Activated CD4-positive, alpha-beta memory T cell treated with anti-CD3 and anti-CD28 coated beads, Interleukin-2, amount 10 ng/mL, durations not matched to agents 7 days and 5 days (primary cell): ENCODE measurements at regions of chr3 and their contacts with region 1.

Region 1: GRCh38 chr3:32296256-32297204 is 58.0 kb downstream of the CMTM8 start:
- DNase-seq: peak; percentile 68
- H3K4me3 Mint-ChIP-seq: peak overlapping the region; percentile 21
- H3K27ac Mint-ChIP-seq: peak overlapping the region; percentile 63
- H3K4me1 Mint-ChIP-seq: peaks cover 27% of the 10 kb centered on the region
- H3K27me3 Mint-ChIP-seq: no peaks in the 10 kb centered on the region

Region 2: GRCh38 chr3:31713816-31714215 is 582.7 kb before region 1 on chr3:
- CTCF ChIA-PET with region 1: no interaction called
- POLR2A ChIA-PET with region 1: no interaction called
- DNase-seq: no peak
- H3K4me3 Mint-ChIP-seq: no peak overlapping the region
- H3K27ac Mint-ChIP-seq: no peak overlapping the region
- H3K4me1 Mint-ChIP-seq: no peaks in the 10 kb centered on the region
- H3K27me3 Mint-ChIP-seq: no peaks in the 10 kb centered on the region

Region 3: GRCh38 chr3:32238453-32239306 is 57.9 kb before region 1 on chr3 and contains the start of gene CMTM8:
- CTCF ChIA-PET with region 1: interaction called, 11 read pairs
- POLR2A ChIA-PET with region 1: interaction called, 3 read pairs
- DNase-seq: peak; percentile 69
- H3K4me3 Mint-ChIP-seq: peak within 1 kb of the TSS; percentile 79
- H3K27ac Mint-ChIP-seq: no peak within 1 kb of the TSS
- H3K4me1 Mint-ChIP-seq: peaks cover 22% of the 10 kb centered on the region
- H3K27me3 Mint-ChIP-seq: peaks cover 31% of the 10 kb centered on the region
- total RNA-seq, gene CMTM8: 5.7 to 6.2 TPM

Region 4: GRCh38 chr3:32275506-32275905 is 21.0 kb before region 1 on chr3:
- CTCF ChIA-PET with region 1: no interaction called
- POLR2A ChIA-PET with region 1: no interaction called
- DNase-seq: no peak
- H3K4me3 Mint-ChIP-seq: no peak overlapping the region
- H3K27ac Mint-ChIP-seq: no peak overlapping the region
- H3K4me1 Mint-ChIP-seq: no peaks in the 10 kb centered on the region
- H3K27me3 Mint-ChIP-seq: no peaks in the 10 kb centered on the region

Region 5: DNA sequence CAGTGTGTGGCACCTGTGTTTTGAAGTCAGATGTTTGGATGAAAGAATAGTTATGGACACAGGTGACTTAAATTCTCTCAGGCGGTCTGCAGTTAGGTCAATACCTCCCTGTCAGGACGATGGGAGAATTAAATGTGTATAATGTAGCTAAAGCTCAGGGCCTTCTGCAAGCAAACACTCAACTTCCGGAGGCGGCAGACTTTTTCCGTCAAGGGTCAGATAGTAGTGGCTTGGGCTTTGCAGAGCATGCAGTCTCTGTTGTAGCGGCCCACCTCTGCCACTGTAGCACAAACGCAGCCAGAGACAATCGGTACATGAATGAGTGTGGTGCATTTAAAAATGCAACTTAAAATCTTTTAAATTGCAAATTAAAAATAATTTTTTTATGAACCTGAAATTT is 10.6 kb before region 1 on chr3:
- CTCF ChIA-PET with region 1: interaction called, 16 read pairs
- POLR2A ChIA-PET with region 1: interaction called, 6 read pairs
- DNase-seq: no peak
- H3K4me3 Mint-ChIP-seq: no peak overlapping the region
- H3K27ac Mint-ChIP-seq: peak overlapping the region; percentile 65
- H3K4me1 Mint-ChIP-seq: peaks cover 29% of the 10 kb centered on the region
- H3K27me3 Mint-ChIP-seq: no peaks in the 10 kb centered on the region

Region 6: DNA sequence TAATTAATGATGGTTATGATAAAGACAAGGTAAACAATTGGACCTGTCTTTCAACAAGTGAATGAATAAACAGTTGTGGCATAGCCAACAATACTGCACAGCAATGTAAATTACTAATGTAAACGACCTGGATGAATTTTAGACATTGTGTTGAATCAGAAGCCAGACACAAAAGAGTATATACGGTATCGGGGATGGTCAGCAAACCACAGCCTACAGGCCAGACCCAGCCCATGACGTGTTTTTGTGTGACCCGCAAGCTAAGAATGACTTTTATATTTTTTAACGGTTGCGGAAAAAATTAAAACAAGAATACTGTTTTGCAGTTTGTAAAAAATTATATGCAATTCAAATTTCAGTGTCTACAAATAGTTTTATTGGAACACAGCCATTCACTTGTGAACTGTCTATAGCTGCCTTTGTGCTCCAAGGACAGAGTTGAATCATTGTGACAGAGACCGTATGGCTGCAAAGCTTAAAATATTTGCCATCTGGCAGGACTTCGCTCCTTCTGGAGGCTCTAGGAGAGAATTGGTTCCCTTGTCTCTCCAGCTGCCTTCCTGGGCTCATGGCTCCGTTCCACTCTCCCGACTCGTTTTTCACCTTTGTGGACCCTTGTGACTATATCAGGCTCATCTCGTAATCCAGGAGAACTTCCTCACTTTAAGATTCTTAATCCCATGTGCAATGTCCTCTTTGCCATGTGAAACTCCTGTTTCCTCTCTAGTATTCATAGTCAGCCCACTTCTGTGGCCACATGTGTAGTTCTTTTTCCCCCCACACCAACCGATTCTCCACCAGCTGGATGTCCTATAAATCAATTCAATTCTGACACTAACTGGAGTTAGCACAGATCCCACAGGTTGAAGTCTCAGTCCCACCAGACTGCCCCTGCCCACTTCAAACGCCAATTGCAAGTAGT is 14.6 kb after region 1 on chr3:
- CTCF ChIA-PET with region 1: interaction called, 13 read pairs
- POLR2A ChIA-PET with region 1: interaction called, 7 read pairs
- DNase-seq: no peak
- H3K4me3 Mint-ChIP-seq: no peak overlapping the region
- H3K27ac Mint-ChIP-seq: no peak overlapping the region
- H3K4me1 Mint-ChIP-seq: peaks cover 24% of the 10 kb centered on the region
- H3K27me3 Mint-ChIP-seq: no peaks in the 10 kb centered on the region

Region 7: DNA sequence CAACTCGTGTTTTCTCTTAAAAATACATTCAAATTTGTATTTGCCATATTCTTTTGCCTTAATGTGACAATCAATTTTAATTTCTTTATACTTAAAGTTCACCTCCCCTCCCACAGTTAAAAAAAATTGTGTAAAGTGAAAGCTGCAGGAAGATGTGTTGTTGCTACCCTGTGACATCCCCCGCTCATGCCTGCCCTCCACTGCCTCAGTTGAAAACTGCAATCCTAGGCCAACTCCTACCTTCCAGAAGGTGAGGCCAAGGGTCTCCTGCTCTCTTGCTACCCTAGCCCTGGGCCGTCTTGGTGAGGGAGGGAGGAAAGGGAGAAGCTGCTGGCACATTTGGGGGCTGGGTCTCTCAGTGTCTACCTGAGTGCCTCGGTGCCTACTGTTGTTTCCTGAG is 38.1 kb after region 1 on chr3:
- CTCF ChIA-PET with region 1: interaction called, 46 read pairs
- POLR2A ChIA-PET with region 1: interaction called, 3 read pairs
- DNase-seq: peak; percentile 65
- H3K4me3 Mint-ChIP-seq: no peak overlapping the region
- H3K27ac Mint-ChIP-seq: no peak overlapping the region
- H3K4me1 Mint-ChIP-seq: peaks cover 30% of the 10 kb centered on the region
- H3K27me3 Mint-ChIP-seq: no peaks in the 10 kb centered on the region

Region 8: DNA sequence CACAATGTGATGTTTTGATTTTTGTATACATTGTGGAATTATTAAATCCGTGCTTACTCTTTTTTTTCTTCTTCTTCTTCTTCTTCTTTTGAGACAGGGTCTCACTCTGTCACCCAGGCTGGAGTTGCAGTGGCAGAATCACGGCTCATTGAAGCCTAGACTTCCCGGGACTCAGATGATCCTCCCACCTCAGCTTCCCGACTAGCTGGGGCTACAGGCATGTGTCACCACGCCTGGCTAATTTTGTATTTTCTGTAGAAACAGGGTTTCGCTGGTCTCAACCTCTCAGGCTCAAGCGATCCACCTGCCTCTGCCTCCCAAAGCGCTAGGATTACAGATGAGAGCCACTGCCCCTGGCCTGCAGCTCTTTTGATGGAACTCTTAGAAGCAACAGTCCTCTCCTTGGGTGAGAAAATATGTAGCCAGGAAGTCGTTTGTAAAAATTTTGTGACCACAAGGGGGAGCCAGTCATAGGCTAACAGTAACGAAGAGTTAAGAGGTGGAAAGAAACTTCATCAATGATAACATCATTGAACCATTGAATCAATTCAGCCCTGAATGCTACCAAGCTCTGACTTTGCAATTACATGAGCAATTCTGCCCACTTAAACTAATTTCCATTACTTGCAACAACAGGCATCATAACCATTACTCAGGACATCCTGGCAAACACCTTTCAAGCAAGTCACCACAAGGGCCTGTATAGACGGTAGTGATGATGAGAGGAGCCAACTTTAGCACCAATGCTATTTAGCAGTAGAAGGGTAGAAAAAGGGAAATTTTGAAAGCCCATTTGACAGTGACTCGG is 78.5 kb after region 1 on chr3:
- CTCF ChIA-PET with region 1: interaction called, 14 read pairs
- POLR2A ChIA-PET with region 1: no interaction called
- DNase-seq: peak; percentile 67
- H3K4me3 Mint-ChIP-seq: no peak overlapping the region
- H3K27ac Mint-ChIP-seq: no peak overlapping the region
- H3K4me1 Mint-ChIP-seq: peaks cover 19% of the 10 kb centered on the region
- H3K27me3 Mint-ChIP-seq: peaks cover 3% of the 10 kb centered on the region